WTC11 (cell line): ENCODE measurements at regions of chr1 and their contacts with region 1.

Region 1: DNA sequence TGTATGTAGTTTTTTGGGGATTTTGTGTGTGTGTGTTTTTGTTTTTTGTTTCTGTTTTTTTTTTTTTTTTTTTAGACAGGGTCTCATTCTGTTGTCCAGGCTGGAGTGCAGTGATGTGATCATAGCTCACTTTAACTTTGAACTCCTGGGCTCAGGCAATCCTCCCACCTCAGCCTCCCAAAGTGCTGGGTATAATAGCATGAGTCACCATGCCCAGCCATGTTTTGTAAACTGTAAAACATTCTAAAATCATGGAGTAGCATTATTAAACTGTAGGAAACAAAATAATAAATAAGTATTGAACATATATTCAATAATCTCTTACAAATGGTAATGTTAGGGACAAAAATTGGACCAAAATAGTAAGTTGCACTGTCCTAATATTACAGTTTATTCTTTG is 124.0 kb downstream of the FAF1 start:
- DNase-seq: no peak
- ATAC-seq: no peak
- H3K4me3 Mint-ChIP-seq: no peak overlapping the region
- H3K27ac Mint-ChIP-seq: no peak overlapping the region
- H3K4me1 Mint-ChIP-seq: no peaks in the 10 kb centered on the region
- H3K27me3 Mint-ChIP-seq: no peaks in the 10 kb centered on the region
- CTCF ChIP-seq: no peak

Region 2: GRCh38 chr1:50704126-50704525 is 132.0 kb before region 1 on chr1:
- CTCF ChIA-PET with region 1: no interaction called
- POLR2A ChIA-PET with region 1: no interaction called
- DNase-seq: no peak
- ATAC-seq: no peak
- H3K4me3 Mint-ChIP-seq: no peak overlapping the region
- H3K27ac Mint-ChIP-seq: 0 out of 2 replicates have a peak overlapping the region, but pooled peaks have one; percentile 83
- H3K4me1 Mint-ChIP-seq: peaks cover 54% of the 10 kb centered on the region
- H3K27me3 Mint-ChIP-seq: no peaks in the 10 kb centered on the region
- CTCF ChIP-seq: peak; percentile 75

Region 3: GRCh38 chr1:52323731-52324130 is 1487.6 kb after region 1 on chr1:
- CTCF ChIA-PET with region 1: no interaction called
- POLR2A ChIA-PET with region 1: interaction called, 10 read pairs
- DNase-seq: no peak
- ATAC-seq: no peak
- H3K4me3 Mint-ChIP-seq: no peak overlapping the region
- H3K27ac Mint-ChIP-seq: no peak overlapping the region
- H3K4me1 Mint-ChIP-seq: peaks cover 11% of the 10 kb centered on the region
- H3K27me3 Mint-ChIP-seq: no peaks in the 10 kb centered on the region
- CTCF ChIP-seq: no peak